ENCODE measurements at regions of chr3 and their contacts with region 1.

Region 1: GRCh38 chr3:191253089-191253799 is 54.2 kb downstream of the OSTN start:
- DNase-seq: no peak
- ATAC-seq: no peak
- H3K4me3 ChIP-seq: no peak overlapping the region
- H3K27ac ChIP-seq: no peak overlapping the region
- H3K4me1 ChIP-seq: peaks cover 0 to 11% (median 0%) of the 10 kb centered on the region in 9 donors
- H3K27me3 ChIP-seq: no peaks in the 10 kb centered on the region
- CTCF ChIP-seq: no peak

Region 2: DNA sequence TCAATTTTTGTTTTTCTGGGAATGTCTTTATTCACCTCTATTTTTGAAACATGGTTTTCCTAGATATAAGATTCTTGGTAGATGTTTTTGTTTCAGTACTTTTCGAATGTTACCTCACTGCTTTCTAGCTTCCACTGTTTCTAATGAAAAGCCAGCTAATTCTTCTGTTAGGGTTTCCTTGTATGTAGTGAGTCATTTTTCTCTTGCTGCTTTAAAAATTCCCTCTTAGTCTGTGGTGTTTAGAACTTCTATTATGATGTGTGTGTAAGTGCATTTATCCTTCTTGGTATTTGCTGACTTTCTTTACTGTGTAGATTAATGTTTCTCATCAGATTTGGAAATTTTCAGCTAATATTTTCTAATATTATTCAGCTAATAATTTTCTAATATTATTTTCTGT is 205.3 kb before region 1 on chr3:
- intact Hi-C with region 1: no loop called
- DNase-seq: no peak
- ATAC-seq: no peak
- H3K4me3 ChIP-seq: no peak overlapping the region
- H3K27ac ChIP-seq: no peak overlapping the region
- H3K4me1 ChIP-seq: no peaks in the 10 kb centered on the region
- H3K27me3 ChIP-seq: no peaks in the 10 kb centered on the region
- CTCF ChIP-seq: no peak

Region 3: DNA sequence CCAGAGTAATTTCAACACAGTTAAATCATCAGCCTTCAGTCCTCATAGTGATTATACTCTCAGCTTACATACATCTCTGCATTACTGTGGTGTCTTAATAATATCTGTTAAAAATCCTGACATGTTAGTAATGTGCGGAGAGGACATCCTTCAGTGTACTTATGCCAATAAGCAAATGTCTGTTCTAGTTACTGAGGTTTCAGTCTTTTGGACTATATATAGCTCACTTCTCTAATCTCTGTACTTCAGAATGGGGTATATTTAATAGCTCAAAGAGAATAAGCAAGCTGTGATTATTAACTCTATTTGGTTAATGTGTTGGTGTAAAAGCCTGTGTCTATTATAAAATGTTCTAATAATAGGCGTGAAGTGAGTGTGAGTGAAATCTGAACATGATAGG is 83.1 kb before region 1 on chr3:
- intact Hi-C with region 1: no loop called
- DNase-seq: no peak
- ATAC-seq: no peak
- H3K4me3 ChIP-seq: no peak overlapping the region
- H3K27ac ChIP-seq: no peak overlapping the region
- H3K4me1 ChIP-seq: peaks cover 0 to 10% (median 0%) of the 10 kb centered on the region in 9 donors
- H3K27me3 ChIP-seq: no peaks in the 10 kb centered on the region
- CTCF ChIP-seq: no peak

Region 4: DNA sequence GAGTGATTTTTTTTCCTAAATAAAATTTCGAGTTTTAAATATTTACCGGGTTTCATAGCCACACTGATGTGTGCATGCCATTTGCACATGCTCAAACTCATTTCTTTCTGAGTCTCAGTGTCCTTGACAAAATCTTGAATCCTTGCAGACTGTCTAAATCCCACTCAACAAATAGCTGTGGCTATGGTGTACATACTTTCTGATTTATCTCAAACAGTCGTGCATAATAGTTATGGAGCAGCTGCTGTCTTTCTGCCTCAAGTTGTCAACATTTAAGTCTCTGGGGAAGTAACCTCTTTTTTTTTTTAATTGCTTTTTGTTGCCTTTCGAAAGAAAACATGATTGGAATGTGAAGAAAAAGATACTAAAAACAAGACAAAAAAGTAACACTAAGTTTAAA is 129.9 kb after region 1 on chr3:
- intact Hi-C with region 1: loop called in 5 of 10 experiments (anchors 5 to 10 kb)
- DNase-seq: no peak
- ATAC-seq: peak in 6 of 8 donors; percentile 53 to 78 (median 70)
- H3K4me3 ChIP-seq: no peak overlapping the region
- H3K27ac ChIP-seq: peak overlapping the region in 2 of 10 donors; percentile 18 to 28
- H3K4me1 ChIP-seq: peaks cover 3 to 40% (median 18%) of the 10 kb centered on the region in 9 donors
- H3K27me3 ChIP-seq: no peaks in the 10 kb centered on the region
- CTCF ChIP-seq: no peak

Region 5: DNA sequence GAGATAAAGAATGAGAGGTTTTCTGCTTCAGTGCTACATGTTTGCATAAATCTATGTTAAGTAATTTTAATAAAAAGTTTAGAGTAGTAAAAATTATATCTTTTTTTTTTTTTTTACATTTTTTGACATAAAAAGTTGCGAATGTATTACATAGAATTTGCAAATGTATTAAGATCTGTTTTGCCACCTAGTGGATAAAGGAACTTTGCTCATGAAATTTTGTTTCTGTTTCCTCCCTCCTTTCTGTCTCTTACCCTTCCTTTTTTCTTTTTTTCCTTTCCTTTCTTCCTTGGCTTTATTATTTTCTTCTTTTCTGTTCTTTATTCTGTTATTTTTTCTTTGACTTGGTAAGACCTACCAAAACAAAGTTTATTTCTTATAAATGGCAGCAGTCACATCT is 135.6 kb after region 1 on chr3:
- intact Hi-C with region 1: loop called in 4 of 10 experiments (anchors 5 to 10 kb)
- DNase-seq: no peak
- ATAC-seq: no peak
- H3K4me3 ChIP-seq: no peak overlapping the region
- H3K27ac ChIP-seq: no peak overlapping the region
- H3K4me1 ChIP-seq: peaks cover 0 to 9% (median 0%) of the 10 kb centered on the region in 9 donors
- H3K27me3 ChIP-seq: no peaks in the 10 kb centered on the region
- CTCF ChIP-seq: peak in 7 of 9 donors; percentile 21 to 53 (median 41)